ENCODE measurements at regions of chr3 and their contacts with region 1.

Region 1: DNA sequence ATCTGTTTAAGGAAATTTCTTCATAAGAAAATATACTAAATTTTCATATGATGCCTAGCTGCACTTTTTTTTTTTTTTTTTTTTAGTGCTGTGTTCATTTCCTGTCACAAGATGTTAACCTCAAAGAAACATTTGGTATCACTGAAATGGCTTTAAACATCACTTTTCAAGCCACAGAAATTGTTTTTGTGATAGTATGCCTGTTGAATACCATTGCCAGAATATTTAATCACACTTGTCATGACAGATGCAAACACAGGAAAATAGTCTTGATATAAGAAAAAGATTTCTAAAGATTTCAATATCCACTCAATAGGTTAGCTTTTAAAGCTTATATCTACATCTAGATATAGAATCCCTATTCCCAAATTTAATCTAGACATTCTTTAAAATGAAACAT is 608.5 kb upstream of the AGTR1 start:
- DNase-seq: no peak
- ATAC-seq: no peak
- H3K4me3 ChIP-seq: no peak overlapping the region
- H3K27ac ChIP-seq: no peak overlapping the region
- H3K4me1 ChIP-seq: no peaks in the 10 kb centered on the region
- H3K27me3 ChIP-seq: 0 out of 2 replicates have a peak, but pooled peaks cover 3% of the 10 kb centered on the region
- CTCF ChIP-seq: no peak

Region 2: GRCh38 chr3:148042663-148043445 is 46.3 kb before region 1 on chr3:
- CTCF ChIA-PET with region 1: no interaction called
- POLR2A ChIA-PET with region 1: no interaction called
- intact Hi-C with region 1: no loop called
- DNase-seq: peak; percentile 16
- ATAC-seq: no peak
- H3K4me3 ChIP-seq: no peak overlapping the region
- H3K27ac ChIP-seq: no peak overlapping the region
- H3K4me1 ChIP-seq: no peaks in the 10 kb centered on the region
- H3K27me3 ChIP-seq: peaks cover 48% of the 10 kb centered on the region; the same call in 1 of the 2 replicates
- CTCF ChIP-seq: no peak

Region 3: DNA sequence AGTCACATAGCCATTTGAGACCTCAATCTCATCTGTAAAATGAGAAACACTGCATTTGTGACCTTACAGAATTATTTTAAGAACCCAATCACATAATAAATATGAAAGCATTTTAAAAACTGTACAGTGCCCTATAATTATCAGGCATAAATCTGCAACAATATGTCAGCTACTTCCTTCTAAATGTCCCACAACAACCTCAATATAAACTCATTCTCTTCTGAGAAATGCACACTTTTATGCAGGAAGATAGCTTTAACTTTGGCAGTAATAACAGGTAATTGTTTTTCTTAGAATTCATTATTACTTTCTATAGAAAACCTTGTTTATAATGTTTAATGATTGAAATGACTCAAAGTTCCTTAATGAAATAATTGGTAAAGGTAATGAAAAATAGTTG is 207.8 kb after region 1 on chr3:
- CTCF ChIA-PET with region 1: interaction called, 10 read pairs
- POLR2A ChIA-PET with region 1: no interaction called
- intact Hi-C with region 1: no loop called
- DNase-seq: no peak
- ATAC-seq: no peak
- H3K4me3 ChIP-seq: no peak overlapping the region
- H3K27ac ChIP-seq: no peak overlapping the region
- H3K4me1 ChIP-seq: no peaks in the 10 kb centered on the region
- H3K27me3 ChIP-seq: no peaks in the 10 kb centered on the region
- CTCF ChIP-seq: no peak

Measured in PC-3 (cell line).